ENCODE measurements at regions of chr10 and their contacts with region 1.

Region 1: GRCh38 chr10:14195433-14195832 is 135.3 kb downstream of the FRMD4A start:
- DNase-seq: no peak
- ATAC-seq: no peak
- H3K4me3 ChIP-seq: no peak overlapping the region
- H3K27ac ChIP-seq: no peak overlapping the region
- H3K4me1 ChIP-seq: no peaks in the 10 kb centered on the region
- H3K27me3 ChIP-seq: peaks cover 11% of the 10 kb centered on the region
- CTCF ChIP-seq: no peak

Region 2: GRCh38 chr10:14259696-14260566 is 64.5 kb after region 1 on chr10:
- intact Hi-C with region 1: no loop called
- DNase-seq: no peak
- ATAC-seq: no peak
- H3K4me3 ChIP-seq: no peak overlapping the region
- H3K27ac ChIP-seq: no peak overlapping the region
- H3K4me1 ChIP-seq: no peaks in the 10 kb centered on the region
- H3K27me3 ChIP-seq: peaks cover 9% of the 10 kb centered on the region
- CTCF ChIP-seq: no peak

Region 3: DNA sequence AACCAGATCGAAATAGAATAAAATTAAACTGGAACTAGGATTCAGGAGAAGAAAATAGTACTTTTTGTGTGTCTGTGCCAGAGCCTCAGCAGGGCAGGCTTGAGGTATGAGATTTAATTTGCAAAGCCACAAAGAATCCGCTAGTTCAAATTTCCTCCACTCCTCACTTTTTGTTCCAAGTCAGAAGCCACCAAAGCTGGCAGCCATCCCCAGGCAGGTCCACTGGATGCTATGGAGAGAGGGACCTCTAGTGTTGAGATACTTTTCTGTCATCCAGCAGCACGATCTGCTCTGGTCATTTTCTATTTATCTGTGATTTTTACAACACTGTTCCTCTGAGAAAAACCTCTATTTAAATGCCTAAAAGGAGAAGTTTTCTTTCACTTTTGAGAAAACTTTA is 283.2 kb after region 1 on chr10:
- intact Hi-C with region 1: loop called (anchors 5 kb)
- DNase-seq: no peak
- ATAC-seq: peak; percentile 41
- H3K4me3 ChIP-seq: no peak overlapping the region
- H3K27ac ChIP-seq: no peak overlapping the region
- H3K4me1 ChIP-seq: no peaks in the 10 kb centered on the region
- H3K27me3 ChIP-seq: no peaks in the 10 kb centered on the region
- CTCF ChIP-seq: peak; percentile 45